K562 (cell line): ENCODE measurements at regions of chr4 and their contacts with region 1.

Region 1: GRCh38 chr4:147984065-147984777 is 252.3 kb downstream of the ARHGAP10 start:
- DNase-seq: peak; percentile 54 to 74 (median 68)
- ATAC-seq: peak; percentile 90
- H3K4me3 ChIP-seq: no peak overlapping the region
- H3K27ac ChIP-seq: no peak overlapping the region
- H3K4me1 ChIP-seq: no peaks in the 10 kb centered on the region
- H3K27me3 ChIP-seq: no peaks in the 10 kb centered on the region
- CTCF ChIP-seq: peak; percentile 76 to 82 (median 80)
- EP300 ChIP-seq: no peak
- POLR2A ChIP-seq: no peak
- RAD21 ChIP-seq: peak; percentile 63 to 68

Region 2: DNA sequence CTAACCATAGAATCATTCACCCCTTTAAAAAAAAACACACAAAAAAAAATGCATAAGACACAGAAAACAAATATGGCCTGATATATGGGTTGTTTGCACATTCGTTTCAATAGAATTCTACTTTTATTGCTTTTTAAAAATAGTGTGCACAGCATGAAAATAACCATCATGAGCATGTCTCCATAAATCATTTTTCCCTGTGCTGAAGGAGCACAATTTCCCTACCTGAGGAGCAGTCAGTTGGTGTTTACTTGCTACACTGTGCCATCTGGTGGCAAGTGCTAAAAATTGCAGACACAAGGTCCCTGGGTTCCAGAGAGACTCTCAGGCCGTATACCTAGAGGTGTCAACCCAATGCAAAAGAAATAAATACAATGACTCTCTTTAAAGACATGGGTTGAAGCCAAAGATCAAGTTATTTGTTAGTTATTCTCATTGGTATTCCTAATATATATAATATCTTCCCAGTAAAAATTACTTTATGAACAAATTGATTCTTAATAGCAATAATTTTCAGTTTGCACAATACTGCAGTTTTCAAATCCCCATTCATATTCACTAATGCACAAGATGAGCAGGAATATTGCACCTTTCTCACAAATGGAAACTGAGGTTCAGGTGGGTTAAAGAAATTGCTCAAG is 1280.0 kb after region 1 on chr4:
- CTCF ChIA-PET with region 1: no interaction called
- POLR2A ChIA-PET with region 1: no interaction called
- in situ Hi-C with region 1: no loop called
- intact Hi-C with region 1: loop called (anchors 5 kb)
- DNase-seq: peak; percentile 6 to 45 (median 24)
- ATAC-seq: peak; percentile 68; the same call in 2 of the 3 replicates
- H3K4me3 ChIP-seq: no peak overlapping the region
- H3K27ac ChIP-seq: no peak overlapping the region
- H3K4me1 ChIP-seq: no peaks in the 10 kb centered on the region
- H3K27me3 ChIP-seq: no peaks in the 10 kb centered on the region
- CTCF ChIP-seq: peak; percentile 30 to 53 (median 51); a peak in 4 of 6 replicates
- EP300 ChIP-seq: no peak
- POLR2A ChIP-seq: no peak
- RAD21 ChIP-seq: peak; percentile 37 to 59

Region 3: GRCh38 chr4:149897783-149898182 is 1913.6 kb after region 1 on chr4:
- CTCF ChIA-PET with region 1: no interaction called
- POLR2A ChIA-PET with region 1: no interaction called
- in situ Hi-C with region 1: no loop called
- intact Hi-C with region 1: loop called (anchors 5 kb)
- DNase-seq: peak in 2 of 4 experiments; percentile 4 to 5
- ATAC-seq: no peak
- H3K4me3 ChIP-seq: no peak overlapping the region
- H3K27ac ChIP-seq: no peak overlapping the region
- H3K4me1 ChIP-seq: no peaks in the 10 kb centered on the region
- H3K27me3 ChIP-seq: no peaks in the 10 kb centered on the region
- CTCF ChIP-seq: peak in 1 of 3 experiments; percentile 27; a peak in 1 of 6 replicates
- EP300 ChIP-seq: no peak
- POLR2A ChIP-seq: no peak
- RAD21 ChIP-seq: peak in 1 of 2 experiments; percentile 52; a peak in 3 of 4 replicates